ENCODE measurements at regions of chr2 and their contacts with region 1.

Region 1: DNA sequence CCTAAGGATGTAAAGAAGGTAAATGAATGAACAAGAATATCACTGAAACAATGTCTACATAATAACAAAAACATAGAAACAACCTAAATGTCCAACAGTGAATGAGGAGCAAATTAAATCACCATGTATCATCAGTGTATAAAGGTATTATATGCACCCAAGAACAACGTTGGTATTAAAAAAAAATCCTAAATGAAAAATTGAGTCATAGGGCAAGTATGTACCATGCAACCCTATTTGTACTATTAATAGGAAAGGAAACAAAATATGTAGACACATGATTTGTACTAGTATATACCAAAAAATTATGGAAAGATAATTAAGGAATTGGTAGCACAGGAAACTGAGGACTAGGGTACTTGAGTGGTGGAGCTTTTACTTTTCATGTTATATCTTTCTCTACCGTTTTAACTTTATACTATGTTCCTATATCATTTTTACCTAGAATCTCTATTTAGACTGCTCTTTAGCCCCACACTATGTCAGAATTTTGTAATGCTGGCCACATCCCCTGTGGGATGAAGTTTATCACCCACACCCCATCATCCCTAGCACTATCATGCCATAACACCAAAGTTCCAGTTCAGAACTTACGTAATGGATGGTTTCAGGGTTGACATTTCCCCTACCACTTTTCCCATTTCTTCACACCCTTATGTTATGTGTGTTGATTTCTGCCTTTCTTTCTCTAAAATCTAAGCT is 25.6 kb downstream of the IKZF2 start:
- DNase-seq: peak in 2 of 9 experiments; percentile 57 to 67
- ATAC-seq: peak; percentile 81
- H3K4me3 ChIP-seq: no peak overlapping the region
- H3K4me3 Mint-ChIP-seq: no peak overlapping the region
- H3K27ac ChIP-seq: peak overlapping the region in 1 of 2 experiments; percentile 23
- H3K27ac Mint-ChIP-seq: no peak overlapping the region
- H3K4me1 ChIP-seq: peaks cover 9% of the 10 kb centered on the region
- H3K4me1 Mint-ChIP-seq: peaks cover 67% of the 10 kb centered on the region
- H3K27me3 ChIP-seq: no peaks in the 10 kb centered on the region
- H3K27me3 Mint-ChIP-seq: no peaks in the 10 kb centered on the region
- CTCF ChIP-seq: peak; percentile 13

Region 2: GRCh38 chr2:213057977-213058376 is 67.8 kb before region 1 on chr2:
- CTCF ChIA-PET with region 1: no interaction called
- POLR2A ChIA-PET with region 1: no interaction called
- intact Hi-C with region 1: loop called in 1 of 2 experiments (anchors 5 kb)
- DNase-seq: no peak
- ATAC-seq: no peak
- H3K4me3 ChIP-seq: no peak overlapping the region
- H3K4me3 Mint-ChIP-seq: no peak overlapping the region
- H3K27ac ChIP-seq: no peak overlapping the region
- H3K27ac Mint-ChIP-seq: peak overlapping the region; percentile 79
- H3K4me1 ChIP-seq: no peaks in the 10 kb centered on the region
- H3K4me1 Mint-ChIP-seq: peaks cover 20% of the 10 kb centered on the region
- H3K27me3 ChIP-seq: no peaks in the 10 kb centered on the region
- H3K27me3 Mint-ChIP-seq: no peaks in the 10 kb centered on the region
- CTCF ChIP-seq: no peak

Region 3: GRCh38 chr2:213145715-213146242 is 20.0 kb after region 1 on chr2:
- CTCF ChIA-PET with region 1: interaction called, 15 read pairs
- POLR2A ChIA-PET with region 1: interaction called, 15 read pairs
- intact Hi-C with region 1: loop called in 1 of 2 experiments (anchors 1 kb)
- DNase-seq: peak in 1 of 9 experiments; percentile 36
- ATAC-seq: no peak
- H3K4me3 ChIP-seq: peak overlapping the region in 1 of 2 experiments; percentile 18
- H3K4me3 Mint-ChIP-seq: peak overlapping the region; percentile 68
- H3K27ac ChIP-seq: no peak overlapping the region
- H3K27ac Mint-ChIP-seq: peak overlapping the region; percentile 62
- H3K4me1 ChIP-seq: no peaks in the 10 kb centered on the region
- H3K4me1 Mint-ChIP-seq: peaks cover 62% of the 10 kb centered on the region
- H3K27me3 ChIP-seq: no peaks in the 10 kb centered on the region
- H3K27me3 Mint-ChIP-seq: no peaks in the 10 kb centered on the region
- CTCF ChIP-seq: no peak